Psoas muscle (tissue), 8 donors: ENCODE measurements at regions of chr19 and their contacts with region 1.

Region 1: GRCh38 chr19:58154679-58155648 is 4.4 kb upstream of the ZNF329 start:
- DNase-seq: peak; percentile 96 to 97
- ATAC-seq: peak; percentile 96 to 99 (median 98)
- H3K4me3 ChIP-seq: peak overlapping the region; percentile 92
- H3K27ac ChIP-seq: peak overlapping the region; percentile 81
- H3K4me1 ChIP-seq: peaks cover 4% of the 10 kb centered on the region
- H3K27me3 ChIP-seq: peaks cover 0 to 9% (median 0%) of the 10 kb centered on the region in 3 donors
- CTCF ChIP-seq: peak; percentile 89

Region 2: GRCh38 chr19:57240311-57241090 is 914.5 kb before region 1 on chr19 and contains the start of gene ZNF805:
- intact Hi-C with region 1: no loop called
- DNase-seq: peak; percentile 97 to 99
- ATAC-seq: peak; percentile 99
- H3K4me3 ChIP-seq: peak within 1 kb of the TSS; percentile 97
- H3K27ac ChIP-seq: peak within 1 kb of the TSS; percentile 97
- H3K4me1 ChIP-seq: peaks cover 20% of the 10 kb centered on the region
- H3K27me3 ChIP-seq: no peaks in the 10 kb centered on the region
- CTCF ChIP-seq: peak; percentile 18
- total RNA-seq, gene ZNF805: 10.3 to 16.4 (median 12.7) TPM

Region 3: DNA sequence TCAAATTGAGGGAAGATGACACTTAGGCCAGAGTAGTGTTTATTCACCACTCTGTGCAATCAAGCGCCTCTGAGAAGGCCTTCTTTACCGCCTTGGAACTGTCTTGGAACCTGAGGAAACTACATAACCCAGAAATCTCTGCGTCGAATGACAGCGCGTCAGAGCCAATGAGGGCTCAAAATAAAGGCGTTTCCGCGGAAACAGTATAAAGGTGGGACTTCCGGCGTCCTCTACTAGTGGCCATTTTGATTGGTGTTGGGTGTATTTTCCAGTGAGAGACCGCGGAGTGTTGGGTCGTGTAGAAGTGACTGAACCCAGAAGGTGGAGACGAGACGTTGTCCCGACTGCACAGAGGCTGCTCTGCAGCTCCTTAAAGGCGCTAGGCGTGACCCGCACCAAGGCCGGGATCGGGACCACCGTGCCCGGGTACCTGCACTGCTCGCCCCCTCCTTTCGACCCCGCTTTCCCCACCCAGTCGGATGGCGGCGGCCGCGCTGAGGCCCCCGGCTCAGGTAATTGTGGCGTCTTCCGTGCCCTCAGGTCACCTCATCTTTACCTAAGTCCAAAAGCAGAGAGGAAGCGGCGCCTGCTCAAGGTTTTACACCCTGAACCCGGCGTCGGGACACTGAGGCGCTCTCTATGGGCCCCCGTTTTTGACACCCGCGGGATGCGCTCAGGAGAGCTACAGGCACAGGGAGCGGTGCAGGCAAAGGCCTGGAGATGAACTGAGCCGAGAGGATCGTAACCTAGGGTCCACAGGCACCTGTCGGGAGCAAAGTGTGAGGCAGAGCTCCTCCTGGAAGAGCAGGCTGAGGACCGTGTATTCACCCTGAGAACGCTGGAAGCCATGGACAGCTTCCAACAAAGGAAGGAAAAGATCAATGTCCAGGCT is 408.1 kb before region 1 on chr19 and contains the start of gene ZNF776:
- intact Hi-C with region 1: loop called in 1 of 2 experiments (anchors 10 kb)
- DNase-seq: peak; percentile 76 to 86
- ATAC-seq: peak; percentile 96 to 98 (median 98)
- H3K4me3 ChIP-seq: peak within 1 kb of the TSS; percentile 100
- H3K27ac ChIP-seq: peak within 1 kb of the TSS; percentile 91
- H3K4me1 ChIP-seq: peaks cover 23% of the 10 kb centered on the region
- H3K27me3 ChIP-seq: no peaks in the 10 kb centered on the region
- CTCF ChIP-seq: no peak
- total RNA-seq, gene ZNF776: 7.7 to 15.5 (median 9.0) TPM

Region 4: GRCh38 chr19:58021541-58022282 is 133.3 kb before region 1 on chr19:
- intact Hi-C with region 1: loop called (anchors 2 to 5 kb)
- DNase-seq: no peak
- ATAC-seq: peak in 3 of 4 donors; percentile 53 to 58 (median 56)
- H3K4me3 ChIP-seq: no peak overlapping the region
- H3K27ac ChIP-seq: no peak overlapping the region
- H3K4me1 ChIP-seq: no peaks in the 10 kb centered on the region
- H3K27me3 ChIP-seq: no peaks in the 10 kb centered on the region
- CTCF ChIP-seq: peak; percentile 45

Region 5: GRCh38 chr19:58083021-58083420 is 71.9 kb before region 1 on chr19:
- intact Hi-C with region 1: no loop called
- DNase-seq: no peak
- ATAC-seq: no peak
- H3K4me3 ChIP-seq: no peak overlapping the region
- H3K27ac ChIP-seq: no peak overlapping the region
- H3K4me1 ChIP-seq: no peaks in the 10 kb centered on the region
- H3K27me3 ChIP-seq: no peaks in the 10 kb centered on the region
- CTCF ChIP-seq: no peak

Region 6: GRCh38 chr19:58117841-58118575 is 37.0 kb before region 1 on chr19:
- intact Hi-C with region 1: no loop called
- DNase-seq: no peak
- ATAC-seq: no peak
- H3K4me3 ChIP-seq: peak overlapping the region; percentile 41
- H3K27ac ChIP-seq: no peak overlapping the region
- H3K4me1 ChIP-seq: no peaks in the 10 kb centered on the region
- H3K27me3 ChIP-seq: peaks cover 0 to 17% (median 11%) of the 10 kb centered on the region in 3 donors
- CTCF ChIP-seq: no peak

Region 7: DNA sequence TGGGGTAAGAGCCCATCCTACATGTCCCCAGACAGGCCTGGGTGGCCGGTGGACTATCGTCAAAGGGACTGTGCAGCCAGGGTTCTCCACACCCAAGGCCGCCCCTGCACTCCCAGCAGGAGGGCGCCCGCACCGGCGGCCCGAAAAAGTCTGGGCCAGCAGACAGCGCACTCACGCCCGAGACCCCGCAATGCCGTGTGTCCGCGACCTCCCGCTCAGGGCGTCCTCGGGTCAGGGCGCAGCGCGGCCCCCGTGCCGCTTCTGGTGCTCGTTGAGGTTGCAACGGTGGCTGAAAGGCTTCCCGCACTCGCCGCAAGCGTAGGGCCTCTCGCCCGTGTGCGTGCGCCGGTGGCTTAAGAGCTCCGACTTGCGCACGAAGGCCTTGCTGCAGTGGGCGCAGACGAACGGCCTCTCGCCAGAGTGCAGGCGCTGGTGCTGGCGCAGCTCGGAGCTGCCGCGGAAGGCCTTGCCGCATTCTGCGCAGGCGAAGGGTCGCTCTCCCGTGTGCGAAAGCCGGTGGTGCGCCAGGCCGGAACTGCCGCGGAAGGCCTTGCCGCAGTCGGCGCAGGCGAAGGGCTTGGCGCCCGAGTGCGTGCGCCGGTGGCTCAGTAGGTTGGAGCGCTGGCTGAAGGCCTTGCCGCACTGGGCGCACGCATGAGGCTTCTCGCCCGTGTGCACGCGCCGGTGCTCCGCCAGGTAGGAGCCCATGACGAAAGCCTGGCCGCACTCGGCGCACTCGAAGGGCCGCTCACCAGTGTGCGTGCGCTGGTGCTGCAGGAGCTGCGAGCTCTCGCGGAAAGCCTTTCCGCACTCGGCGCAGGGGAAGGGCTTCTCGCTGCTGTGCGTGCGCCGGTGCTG is 201.2 kb after region 1 on chr19:
- intact Hi-C with region 1: no loop called
- DNase-seq: no peak
- ATAC-seq: peak; percentile 31 to 57 (median 41)
- H3K4me3 ChIP-seq: peak overlapping the region; percentile 59
- H3K27ac ChIP-seq: no peak overlapping the region
- H3K4me1 ChIP-seq: no peaks in the 10 kb centered on the region
- H3K27me3 ChIP-seq: peaks cover 0 to 15% (median 4%) of the 10 kb centered on the region in 3 donors
- CTCF ChIP-seq: no peak